K562 (cell line): ENCODE measurements at regions of chr11 and their contacts with region 1.

Region 1: GRCh38 chr11:95067039-95067840 is 521 bp downstream of the SRSF8 start:
- DNase-seq: peak; percentile 64 to 88 (median 68)
- ATAC-seq: peak; percentile 87
- H3K4me3 ChIP-seq: peak overlapping the region; percentile 86
- H3K27ac ChIP-seq: peak overlapping the region; percentile 94
- H3K4me1 ChIP-seq: peaks cover 0 to 5% of the 10 kb centered on the region in 2 experiments; a peak in 3 of 5 replicates
- H3K27me3 ChIP-seq: no peaks in the 10 kb centered on the region
- CTCF ChIP-seq: peak; percentile 63 to 98 (median 87)
- EP300 ChIP-seq: no peak
- POLR2A ChIP-seq: peak; percentile 87
- RAD21 ChIP-seq: peak in 1 of 2 experiments; percentile 43; a peak in 3 of 4 replicates

Region 2: DNA sequence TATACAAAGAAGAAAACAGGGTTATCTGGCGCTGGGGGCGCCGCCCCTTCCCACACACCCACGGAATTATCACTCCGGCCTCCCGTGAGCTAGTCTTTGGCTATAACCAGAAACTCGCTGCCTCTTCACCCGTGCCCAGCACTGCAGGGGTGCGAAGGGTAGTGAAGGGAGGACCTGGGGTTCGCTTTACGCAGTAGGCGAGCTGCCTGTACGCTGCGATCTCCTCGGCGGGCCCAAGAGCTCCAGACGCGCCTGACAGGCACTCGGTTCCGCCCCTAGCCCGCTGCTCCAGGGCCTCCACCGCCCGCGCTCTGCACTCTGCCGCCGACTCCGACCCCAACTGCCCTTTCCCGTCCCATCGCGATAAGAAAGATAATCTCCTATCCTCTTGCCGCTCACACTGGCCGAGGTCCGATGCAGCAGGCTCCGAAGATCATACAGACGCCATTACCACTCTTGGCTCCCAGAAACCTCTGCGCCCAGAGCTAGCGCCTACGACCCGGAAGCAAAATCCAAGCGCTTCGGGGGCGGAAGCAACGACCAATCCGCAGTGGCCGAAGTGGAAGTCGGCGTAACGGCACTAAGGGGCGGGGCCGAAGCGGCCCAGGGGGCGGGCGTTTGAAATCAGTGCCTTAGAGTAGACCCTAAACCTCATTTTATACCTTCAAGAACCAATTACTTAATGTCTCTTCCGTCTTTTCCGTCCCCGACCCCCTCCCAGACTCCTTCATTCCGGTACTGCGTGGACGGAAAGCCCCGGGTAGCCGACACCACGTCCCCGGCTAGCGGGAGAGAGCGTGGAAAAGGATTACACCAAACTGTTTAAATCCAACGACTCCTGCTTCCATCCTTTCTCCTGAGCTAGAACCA is 93.9 kb before region 1 on chr11 and contains the starts of genes CWC15 and KDM4D:
- CTCF ChIA-PET with region 1: no interaction called
- POLR2A ChIA-PET with region 1: interaction called, 4 read pairs
- in situ Hi-C with region 1: no loop called
- intact Hi-C with region 1: loop called (anchors 5 kb)
- DNase-seq: peak; percentile 94 to 97 (median 95)
- ATAC-seq: peak; percentile 100
- H3K4me3 ChIP-seq: peak within 1 kb of the TSS; percentile 86
- H3K27ac ChIP-seq: peak within 1 kb of the TSS; percentile 83
- H3K4me1 ChIP-seq: peaks cover 0 to 8% of the 10 kb centered on the region in 2 experiments; a peak in 2 of 5 replicates
- H3K27me3 ChIP-seq: no peaks in the 10 kb centered on the region
- CTCF ChIP-seq: no peak
- EP300 ChIP-seq: peak; percentile 27; the same call in 1 of the 2 replicates
- POLR2A ChIP-seq: peak; percentile 95
- RAD21 ChIP-seq: no peak
- polyA plus RNA-seq, gene CWC15: 128 to 168 TPM
- polyA plus RNA-seq, gene KDM4D: 0.34 to 0.39 TPM

Region 3: DNA sequence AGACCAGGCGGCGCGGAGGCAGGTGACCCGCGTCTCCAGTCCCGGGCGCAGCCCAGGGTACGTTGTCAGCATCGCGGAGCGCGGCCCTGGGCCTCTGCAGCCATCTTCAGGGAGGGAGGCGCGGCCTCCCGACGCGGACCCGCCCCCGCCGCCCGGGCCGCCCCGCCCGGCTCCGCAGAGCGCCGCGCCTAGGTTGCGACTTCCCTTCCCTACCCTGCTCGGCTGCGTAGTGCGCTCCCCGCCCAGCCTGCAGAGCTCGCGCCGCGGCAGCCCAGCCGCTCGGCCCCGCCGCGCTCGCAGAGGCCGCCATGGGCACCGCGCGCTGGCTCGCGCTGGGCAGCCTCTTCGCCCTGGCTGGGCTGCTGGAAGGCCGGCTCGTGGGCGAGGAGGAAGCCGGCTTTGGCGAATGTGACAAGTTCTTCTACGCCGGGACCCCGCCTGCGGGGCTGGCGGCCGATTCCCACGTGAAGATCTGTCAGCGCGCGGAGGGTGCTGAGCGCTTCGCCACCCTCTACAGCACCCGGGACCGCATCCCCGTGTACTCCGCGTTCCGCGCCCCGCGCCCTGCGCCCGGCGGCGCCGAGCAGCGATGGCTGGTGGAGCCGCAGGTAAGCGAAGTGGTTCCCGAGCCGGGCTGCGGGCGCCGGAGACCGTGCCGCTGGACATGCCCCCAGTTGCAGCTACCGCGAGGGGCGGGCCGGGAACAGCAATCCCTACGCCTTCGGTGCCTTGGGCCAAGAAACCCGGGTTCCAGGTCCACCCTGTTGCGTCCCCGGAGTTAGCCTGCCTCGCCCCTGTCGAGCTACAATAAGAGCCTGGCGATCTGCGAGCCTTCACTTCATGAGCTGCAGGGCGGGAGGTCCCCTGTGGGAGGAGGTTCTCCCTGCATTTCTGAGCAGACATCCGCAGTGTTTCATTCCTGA is 22.6 kb after region 1 on chr11 and contains the start of gene ENDOD1:
- CTCF ChIA-PET with region 1: no interaction called
- POLR2A ChIA-PET with region 1: interaction called, 33 read pairs
- in situ Hi-C with region 1: no loop called
- intact Hi-C with region 1: loop called (anchors 2 kb)
- DNase-seq: peak; percentile 89 to 91 (median 89)
- ATAC-seq: peak; percentile 98
- H3K4me3 ChIP-seq: peak within 1 kb of the TSS; percentile 79
- H3K27ac ChIP-seq: peak within 1 kb of the TSS; percentile 61
- H3K4me1 ChIP-seq: peaks cover 26 to 33% of the 10 kb centered on the region in 2 experiments
- H3K27me3 ChIP-seq: no peaks in the 10 kb centered on the region
- CTCF ChIP-seq: peak in 2 of 3 experiments; percentile 20 to 28; a peak in 1 of 6 replicates
- EP300 ChIP-seq: no peak
- POLR2A ChIP-seq: no peak; the same call in none of the 2 replicates
- RAD21 ChIP-seq: no peak
- polyA plus RNA-seq, gene ENDOD1: 4.2 to 4.4 TPM

Region 4: DNA sequence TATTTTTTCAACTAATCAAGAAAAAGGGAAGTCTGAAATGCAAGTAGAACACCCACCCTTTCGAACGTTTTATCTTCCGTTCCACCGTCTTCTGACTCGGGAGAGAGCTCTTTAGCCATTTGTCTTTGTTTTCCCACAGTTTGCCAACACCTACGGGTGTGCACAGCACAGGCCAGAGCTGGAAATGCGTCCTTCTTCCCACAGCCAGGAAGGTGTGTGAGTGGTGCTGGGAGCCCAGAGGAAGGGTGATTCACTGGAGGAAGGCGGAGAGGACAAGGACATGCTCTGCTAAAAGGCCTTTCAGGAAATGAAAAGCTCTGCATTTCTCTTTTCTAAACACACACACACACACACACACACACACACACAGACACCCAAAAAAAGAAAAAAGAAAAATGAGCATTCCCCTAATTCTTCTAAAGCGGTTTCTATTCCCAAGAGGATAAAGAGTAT is 40.9 kb after region 1 on chr11:
- CTCF ChIA-PET with region 1: no interaction called
- POLR2A ChIA-PET with region 1: interaction called, 7 read pairs
- in situ Hi-C with region 1: no loop called
- intact Hi-C with region 1: loop called (anchors 1 kb)
- DNase-seq: peak in 1 of 4 experiments; percentile 41
- ATAC-seq: peak; percentile 10
- H3K4me3 ChIP-seq: no peak overlapping the region; the same call in 1 of the 2 replicates
- H3K27ac ChIP-seq: peak overlapping the region; percentile 88
- H3K4me1 ChIP-seq: peaks cover 20 to 56% of the 10 kb centered on the region in 2 experiments
- H3K27me3 ChIP-seq: no peaks in the 10 kb centered on the region
- CTCF ChIP-seq: no peak
- EP300 ChIP-seq: no peak
- POLR2A ChIP-seq: no peak
- RAD21 ChIP-seq: no peak

Region 5: DNA sequence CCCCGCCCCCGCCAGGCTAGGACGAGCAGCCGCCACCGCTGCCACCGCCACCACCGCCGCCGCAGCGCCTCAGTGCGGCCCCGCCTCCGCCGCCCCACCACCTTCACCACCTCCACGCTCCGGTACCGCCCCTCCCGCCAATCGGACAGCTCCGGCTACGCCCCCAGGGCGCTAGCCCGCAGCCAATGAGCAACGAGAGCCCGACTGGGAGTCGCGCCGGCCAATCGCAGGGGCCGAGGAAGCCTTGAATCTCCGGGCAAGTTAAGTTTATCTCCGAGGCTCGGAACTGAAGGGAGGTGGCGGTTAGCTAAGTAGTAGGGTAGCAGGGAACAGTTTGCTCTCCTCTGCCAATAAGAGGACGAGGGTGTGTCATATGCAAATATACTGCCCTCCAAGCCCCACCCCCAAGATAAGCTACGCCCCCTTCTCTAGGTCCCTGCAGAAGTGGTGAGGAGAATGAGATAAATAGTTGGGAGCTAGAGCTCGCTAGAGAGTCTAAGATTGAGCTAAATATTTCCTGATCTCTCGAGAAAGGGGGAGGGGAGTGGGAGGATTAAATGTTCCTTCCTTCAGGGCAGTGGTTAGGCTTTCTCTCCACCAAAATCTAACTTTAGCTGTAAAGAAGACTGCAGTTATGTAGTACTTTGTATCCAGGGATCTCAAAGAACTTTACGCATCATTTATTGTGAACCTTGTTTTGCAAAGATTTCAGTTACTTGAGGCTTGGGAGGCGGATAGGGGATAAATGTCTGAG is 164.1 kb after region 1 on chr11 and contains the start of gene SESN3:
- CTCF ChIA-PET with region 1: no interaction called
- POLR2A ChIA-PET with region 1: interaction called, 4 read pairs
- in situ Hi-C with region 1: no loop called
- intact Hi-C with region 1: loop called (anchors 5 kb)
- DNase-seq: peak; percentile 96 to 98 (median 97)
- ATAC-seq: peak; percentile 98
- H3K4me3 ChIP-seq: peak within 1 kb of the TSS; percentile 63
- H3K27ac ChIP-seq: peak within 1 kb of the TSS; percentile 65
- H3K4me1 ChIP-seq: peaks cover 4 to 14% of the 10 kb centered on the region in 2 experiments; a peak in 4 of 5 replicates
- H3K27me3 ChIP-seq: 0 out of 5 replicates have a peak, but pooled peaks cover 0 to 5% of the 10 kb centered on the region in 2 experiments
- CTCF ChIP-seq: no peak; a peak in 1 of 6 replicates
- EP300 ChIP-seq: no peak
- POLR2A ChIP-seq: no peak
- RAD21 ChIP-seq: peak in 1 of 2 experiments; percentile 27; a peak in 3 of 4 replicates
- polyA plus RNA-seq, gene SESN3: 0.44 to 0.48 TPM